ENCODE measurements at regions of chr3 and their contacts with region 1.

Region 1: DNA sequence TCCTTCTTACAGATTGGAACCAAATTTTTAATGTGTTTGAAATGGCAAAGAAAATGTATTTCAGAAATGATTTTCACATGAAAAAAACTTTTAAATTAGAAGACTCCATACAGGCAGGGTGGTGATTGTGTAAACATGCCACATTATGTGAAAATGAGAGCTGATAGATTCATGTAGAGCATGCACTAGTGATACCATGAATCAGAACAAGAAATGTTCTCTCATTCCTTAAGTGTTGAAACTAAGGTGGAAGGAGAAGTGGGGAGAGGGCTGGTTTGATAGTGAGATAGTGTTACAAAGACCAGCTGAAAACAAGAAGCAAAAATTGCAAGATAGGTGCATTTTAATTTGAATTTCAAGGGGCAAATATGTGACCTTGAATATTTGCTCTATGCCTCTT is 100.3 kb downstream of the CCNL1 start:
- DNase-seq: no peak
- H3K4me3 ChIP-seq: no peak overlapping the region
- H3K4me3 Mint-ChIP-seq: no peak overlapping the region
- H3K27ac Mint-ChIP-seq: peak overlapping the region; percentile 24
- H3K4me1 ChIP-seq: peaks cover 28% of the 10 kb centered on the region
- H3K4me1 Mint-ChIP-seq: peaks cover 16% of the 10 kb centered on the region
- H3K27me3 ChIP-seq: no peaks in the 10 kb centered on the region
- H3K27me3 Mint-ChIP-seq: no peaks in the 10 kb centered on the region
- CTCF ChIP-seq: no peak

Region 2: GRCh38 chr3:156535162-156535627 is 524.5 kb before region 1 on chr3:
- CTCF ChIA-PET with region 1: no interaction called
- POLR2A ChIA-PET with region 1: no interaction called
- intact Hi-C with region 1: loop called (anchors 1 kb)
- DNase-seq: peak; percentile 76 to 79
- H3K4me3 ChIP-seq: no peak overlapping the region
- H3K4me3 Mint-ChIP-seq: peak overlapping the region; percentile 1
- H3K27ac Mint-ChIP-seq: peak overlapping the region; percentile 56
- H3K4me1 ChIP-seq: peaks cover 28% of the 10 kb centered on the region
- H3K4me1 Mint-ChIP-seq: peaks cover 15% of the 10 kb centered on the region
- H3K27me3 ChIP-seq: no peaks in the 10 kb centered on the region
- H3K27me3 Mint-ChIP-seq: no peaks in the 10 kb centered on the region
- CTCF ChIP-seq: peak in 1 of 2 experiments; percentile 24

Region 3: GRCh38 chr3:156816800-156817645 is 242.6 kb before region 1 on chr3:
- CTCF ChIA-PET with region 1: no interaction called
- POLR2A ChIA-PET with region 1: no interaction called
- intact Hi-C with region 1: loop called (anchors 2 kb)
- DNase-seq: peak; percentile 94 to 96
- H3K4me3 ChIP-seq: peak overlapping the region; percentile 84
- H3K4me3 Mint-ChIP-seq: peak overlapping the region; percentile 90
- H3K27ac Mint-ChIP-seq: peak overlapping the region; percentile 91
- H3K4me1 ChIP-seq: peaks cover 43% of the 10 kb centered on the region
- H3K4me1 Mint-ChIP-seq: peaks cover 14% of the 10 kb centered on the region
- H3K27me3 ChIP-seq: no peaks in the 10 kb centered on the region
- H3K27me3 Mint-ChIP-seq: no peaks in the 10 kb centered on the region
- CTCF ChIP-seq: no peak

Region 4: GRCh38 chr3:156826144-156826895 is 233.3 kb before region 1 on chr3 and contains the start of gene LEKR1:
- CTCF ChIA-PET with region 1: no interaction called
- POLR2A ChIA-PET with region 1: no interaction called
- intact Hi-C with region 1: loop called (anchors 1 kb)
- DNase-seq: peak; percentile 93 to 94
- H3K4me3 ChIP-seq: peak within 1 kb of the TSS; percentile 52
- H3K4me3 Mint-ChIP-seq: peak within 1 kb of the TSS; percentile 99
- H3K27ac Mint-ChIP-seq: peak within 1 kb of the TSS; percentile 100
- H3K4me1 ChIP-seq: peaks cover 21% of the 10 kb centered on the region
- H3K4me1 Mint-ChIP-seq: peaks cover 18% of the 10 kb centered on the region
- H3K27me3 ChIP-seq: no peaks in the 10 kb centered on the region
- H3K27me3 Mint-ChIP-seq: no peaks in the 10 kb centered on the region
- CTCF ChIP-seq: no peak
- total RNA-seq, gene LEKR1: 1.4 and 1.6 TPM in 2 replicates

Region 5: DNA sequence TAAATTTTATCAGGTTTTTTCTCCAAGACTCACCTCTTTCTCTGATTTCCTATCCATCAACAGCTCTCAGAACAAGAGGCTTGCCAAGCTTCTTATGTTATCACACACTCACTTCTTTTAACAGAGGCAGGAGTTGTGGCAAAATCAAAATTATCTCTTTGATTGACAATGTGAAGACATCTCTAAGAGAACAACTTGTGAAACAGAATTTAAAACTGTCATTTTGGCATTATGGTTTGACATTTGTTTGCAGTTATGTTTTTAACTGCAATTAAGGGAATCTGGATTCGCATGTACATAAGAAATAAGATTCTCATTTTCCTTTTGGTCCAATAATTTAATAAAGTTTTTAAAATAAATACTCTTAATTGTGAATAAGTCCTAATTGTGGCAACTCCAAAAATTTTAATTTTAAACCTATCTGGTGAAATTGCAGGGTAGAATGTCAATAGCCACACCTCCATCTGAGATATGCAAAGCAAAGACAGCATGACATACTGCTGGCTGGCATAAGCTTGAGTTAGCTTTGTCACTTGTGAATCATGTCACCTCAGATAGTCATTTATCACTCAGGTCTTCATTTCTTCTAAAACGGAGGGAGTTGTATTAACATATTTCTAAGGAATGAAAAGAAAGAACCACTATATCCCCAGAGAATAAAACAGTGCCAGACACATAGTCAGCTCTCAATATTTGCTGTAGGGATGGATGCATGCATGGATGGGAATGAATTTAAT is 58.3 kb before region 1 on chr3:
- CTCF ChIA-PET with region 1: no interaction called
- POLR2A ChIA-PET with region 1: no interaction called
- intact Hi-C with region 1: loop called (anchors 5 kb)
- DNase-seq: no peak
- H3K4me3 ChIP-seq: no peak overlapping the region
- H3K4me3 Mint-ChIP-seq: no peak overlapping the region
- H3K27ac Mint-ChIP-seq: no peak overlapping the region
- H3K4me1 ChIP-seq: peaks cover 15% of the 10 kb centered on the region
- H3K4me1 Mint-ChIP-seq: peaks cover 18% of the 10 kb centered on the region
- H3K27me3 ChIP-seq: no peaks in the 10 kb centered on the region
- H3K27me3 Mint-ChIP-seq: no peaks in the 10 kb centered on the region
- CTCF ChIP-seq: no peak

Region 6: DNA sequence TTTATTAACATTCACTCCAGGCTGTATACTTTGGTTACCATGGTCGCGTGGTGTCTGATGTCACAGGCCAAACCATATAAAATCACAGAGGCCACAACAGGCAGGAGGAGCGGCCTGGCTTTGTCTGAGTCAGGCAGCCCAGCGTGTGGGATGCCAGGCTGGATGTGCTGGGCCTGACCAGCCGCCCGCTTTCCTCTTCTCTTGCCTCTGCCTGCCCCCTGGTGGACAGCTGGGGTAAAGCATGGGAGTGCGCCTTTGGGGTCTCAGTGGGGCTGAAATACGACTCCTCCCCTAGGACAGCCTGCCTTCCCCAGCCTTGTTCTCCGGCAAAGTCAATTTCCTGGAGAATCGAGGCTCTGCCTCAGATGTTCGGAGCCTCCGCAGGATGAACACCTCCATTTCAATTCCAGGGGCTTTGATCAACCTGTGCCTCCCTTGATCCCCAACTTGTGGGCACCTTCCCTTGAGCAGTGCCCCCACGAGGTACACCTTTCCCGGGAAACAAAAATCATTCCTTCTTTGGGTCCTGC is 22.1 kb after region 1 on chr3:
- CTCF ChIA-PET with region 1: no interaction called
- POLR2A ChIA-PET with region 1: no interaction called
- intact Hi-C with region 1: loop called (anchors 2 kb)
- DNase-seq: peak; percentile 85 to 91
- H3K4me3 ChIP-seq: no peak overlapping the region
- H3K4me3 Mint-ChIP-seq: no peak overlapping the region
- H3K27ac Mint-ChIP-seq: peak overlapping the region; percentile 66
- H3K4me1 ChIP-seq: peaks cover 6% of the 10 kb centered on the region
- H3K4me1 Mint-ChIP-seq: peaks cover 11% of the 10 kb centered on the region
- H3K27me3 ChIP-seq: no peaks in the 10 kb centered on the region
- H3K27me3 Mint-ChIP-seq: no peaks in the 10 kb centered on the region
- CTCF ChIP-seq: peak; percentile 94

Region 7: DNA sequence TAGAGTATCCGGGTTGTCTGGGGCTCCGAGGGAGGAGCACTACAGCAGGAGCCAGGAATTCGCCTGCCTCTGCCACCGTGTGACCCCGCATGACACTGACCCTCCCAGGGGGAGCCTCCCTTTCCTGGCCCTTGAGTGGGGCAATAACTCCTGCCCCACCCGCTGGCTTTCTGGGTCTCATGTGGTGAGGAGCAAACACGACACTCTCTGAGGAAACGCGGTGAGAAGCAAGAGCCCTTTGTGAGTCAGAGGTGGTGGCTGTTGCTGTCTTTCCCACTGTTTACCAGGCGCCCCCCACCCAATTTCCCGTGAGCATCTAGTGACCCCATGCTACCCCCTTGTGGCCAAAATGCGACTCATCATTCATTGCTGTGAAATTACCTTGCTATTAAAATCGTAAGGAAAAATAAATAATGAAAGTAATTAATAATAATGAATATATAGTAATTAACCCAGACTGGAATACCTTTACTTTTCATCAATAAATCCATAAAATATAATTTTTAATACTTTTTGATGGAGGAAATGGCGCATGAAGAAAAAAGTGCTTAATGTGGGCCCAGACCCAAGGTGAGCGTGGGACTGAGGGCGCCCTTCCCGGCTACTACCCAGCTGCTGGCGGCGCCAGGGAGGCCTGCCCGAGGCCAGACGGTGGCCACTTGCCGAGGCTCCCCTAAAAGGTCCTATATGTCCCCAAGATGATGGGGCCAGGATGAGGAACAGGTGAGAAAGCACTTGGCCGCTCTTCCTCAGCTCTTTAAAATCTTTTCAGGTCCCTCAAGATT is 71.0 kb after region 1 on chr3:
- CTCF ChIA-PET with region 1: no interaction called
- POLR2A ChIA-PET with region 1: no interaction called
- intact Hi-C with region 1: loop called (anchors 2 kb)
- DNase-seq: peak; percentile 89 to 94
- H3K4me3 ChIP-seq: peak overlapping the region; percentile 13
- H3K4me3 Mint-ChIP-seq: peak overlapping the region; percentile 64
- H3K27ac Mint-ChIP-seq: peak overlapping the region; percentile 95
- H3K4me1 ChIP-seq: peaks cover 64% of the 10 kb centered on the region
- H3K4me1 Mint-ChIP-seq: peaks cover 33% of the 10 kb centered on the region
- H3K27me3 ChIP-seq: no peaks in the 10 kb centered on the region
- H3K27me3 Mint-ChIP-seq: no peaks in the 10 kb centered on the region
- CTCF ChIP-seq: peak; percentile 55 to 76

Measured in Caco-2 (cell line).